HepG2 (cell line): ENCODE measurements at regions of chr2 and their contacts with region 1.

Region 1: DNA sequence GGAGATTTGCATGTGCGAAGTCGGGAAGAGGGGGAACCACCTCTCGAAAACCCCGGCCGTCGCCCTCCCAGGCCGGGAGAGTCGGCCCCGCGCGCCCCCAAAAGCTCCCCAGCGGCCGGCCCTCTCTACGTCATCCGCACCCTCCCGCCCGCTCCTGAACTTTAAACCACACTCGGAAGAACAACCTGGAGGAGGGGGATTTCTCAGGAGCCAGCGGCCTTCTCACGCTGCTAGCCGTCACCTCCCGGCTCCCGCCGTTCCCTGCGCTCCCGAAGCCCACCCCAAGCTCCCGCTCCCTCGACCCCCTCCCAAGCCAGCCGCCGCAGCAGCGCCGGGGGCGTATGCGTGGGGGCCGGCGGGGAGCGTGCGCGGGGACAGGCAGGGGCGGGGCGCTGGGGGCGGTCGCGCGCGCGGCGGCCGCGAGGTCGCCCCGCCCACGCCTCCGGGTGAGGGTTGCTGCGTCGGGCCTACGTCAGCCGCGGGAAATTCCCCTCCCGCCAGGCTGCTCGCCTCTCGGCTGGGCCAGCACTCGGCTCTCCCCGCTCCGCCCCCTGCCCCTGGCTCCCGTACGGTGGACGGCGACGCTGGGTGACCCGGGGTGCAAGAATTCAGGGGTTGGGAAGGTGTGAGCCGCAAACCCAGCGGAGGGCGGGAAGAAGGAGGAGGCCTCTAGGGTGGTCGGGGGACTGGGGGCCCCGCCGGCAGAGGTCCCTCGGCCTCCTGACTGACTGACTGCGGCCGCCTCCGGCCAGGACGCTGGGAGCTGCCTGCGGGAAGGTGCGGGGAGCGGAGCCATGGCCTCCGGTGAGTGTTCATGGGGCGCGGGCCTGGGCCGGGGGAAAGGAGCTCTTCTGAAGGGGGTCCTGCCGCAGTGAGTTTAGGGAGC is at the start of gene REL:
- DNase-seq: peak; percentile 83
- ATAC-seq: peak; percentile 93
- H3K4me3 ChIP-seq: peak within 1 kb of the TSS; percentile 94 to 98 (median 98)
- H3K27ac ChIP-seq: peak within 1 kb of the TSS; percentile 93
- H3K4me1 ChIP-seq: peaks cover 39% of the 10 kb centered on the region
- H3K27me3 ChIP-seq: no peaks in the 10 kb centered on the region; a peak in 1 of 5 replicates
- CTCF ChIP-seq: no peak; the same call in none of the 2 replicates
- EP300 ChIP-seq: peak in 1 of 2 experiments; percentile 38; a peak in 1 of 4 replicates
- POLR2A ChIP-seq: peak; percentile 61 to 84
- RAD21 ChIP-seq: no peak
- total RNA-seq, gene REL: 7.0 and 9.7 TPM in 2 replicates

Region 2: GRCh38 chr2:60621688-60622429 is 259.4 kb before region 1 on chr2:
- CTCF ChIA-PET with region 1: no interaction called
- POLR2A ChIA-PET with region 1: no interaction called
- in situ Hi-C with region 1: no loop called
- intact Hi-C with region 1: no loop called
- DNase-seq: no peak
- ATAC-seq: no peak
- H3K4me3 ChIP-seq: no peak overlapping the region
- H3K27ac ChIP-seq: no peak overlapping the region
- H3K4me1 ChIP-seq: no peaks in the 10 kb centered on the region
- H3K27me3 ChIP-seq: peaks cover 3 to 9% of the 10 kb centered on the region in 2 experiments; a peak in 3 of 5 replicates
- CTCF ChIP-seq: no peak
- EP300 ChIP-seq: no peak
- POLR2A ChIP-seq: no peak
- RAD21 ChIP-seq: no peak

Region 3: DNA sequence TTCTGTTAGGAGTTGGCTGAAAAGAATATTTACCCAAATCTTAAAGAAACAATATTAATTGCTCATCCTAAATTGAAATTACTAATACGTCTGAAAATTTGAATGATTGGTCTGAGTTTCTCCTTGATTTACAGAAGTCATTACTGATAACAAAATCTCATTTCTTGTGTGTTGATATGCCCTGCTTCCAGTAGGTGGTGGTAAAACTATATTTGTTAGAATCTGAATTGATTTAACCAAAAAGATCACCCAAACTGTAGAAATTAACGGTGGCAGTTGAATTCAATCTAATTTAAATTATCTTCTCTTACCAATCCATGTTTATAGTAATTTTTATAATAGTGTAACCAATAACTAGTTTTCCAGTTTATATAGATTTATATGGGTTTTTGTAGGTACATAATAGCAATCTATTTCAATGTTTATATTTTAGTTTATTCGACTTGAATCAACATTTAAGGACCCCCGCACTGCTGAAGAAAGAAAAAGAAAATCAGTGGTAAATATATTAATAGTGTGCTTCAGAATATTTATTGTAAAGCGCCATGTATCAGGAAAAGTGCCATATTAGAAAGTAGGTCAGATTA is 86.9 kb before region 1 on chr2:
- CTCF ChIA-PET with region 1: no interaction called
- POLR2A ChIA-PET with region 1: no interaction called
- in situ Hi-C with region 1: no loop called
- intact Hi-C with region 1: loop called (anchors 5 kb)
- DNase-seq: peak; percentile 16
- ATAC-seq: no peak
- H3K4me3 ChIP-seq: no peak overlapping the region
- H3K27ac ChIP-seq: no peak overlapping the region
- H3K4me1 ChIP-seq: no peaks in the 10 kb centered on the region
- H3K27me3 ChIP-seq: no peaks in the 10 kb centered on the region
- CTCF ChIP-seq: peak; percentile 55
- EP300 ChIP-seq: no peak
- POLR2A ChIP-seq: no peak
- RAD21 ChIP-seq: no peak

Region 4: DNA sequence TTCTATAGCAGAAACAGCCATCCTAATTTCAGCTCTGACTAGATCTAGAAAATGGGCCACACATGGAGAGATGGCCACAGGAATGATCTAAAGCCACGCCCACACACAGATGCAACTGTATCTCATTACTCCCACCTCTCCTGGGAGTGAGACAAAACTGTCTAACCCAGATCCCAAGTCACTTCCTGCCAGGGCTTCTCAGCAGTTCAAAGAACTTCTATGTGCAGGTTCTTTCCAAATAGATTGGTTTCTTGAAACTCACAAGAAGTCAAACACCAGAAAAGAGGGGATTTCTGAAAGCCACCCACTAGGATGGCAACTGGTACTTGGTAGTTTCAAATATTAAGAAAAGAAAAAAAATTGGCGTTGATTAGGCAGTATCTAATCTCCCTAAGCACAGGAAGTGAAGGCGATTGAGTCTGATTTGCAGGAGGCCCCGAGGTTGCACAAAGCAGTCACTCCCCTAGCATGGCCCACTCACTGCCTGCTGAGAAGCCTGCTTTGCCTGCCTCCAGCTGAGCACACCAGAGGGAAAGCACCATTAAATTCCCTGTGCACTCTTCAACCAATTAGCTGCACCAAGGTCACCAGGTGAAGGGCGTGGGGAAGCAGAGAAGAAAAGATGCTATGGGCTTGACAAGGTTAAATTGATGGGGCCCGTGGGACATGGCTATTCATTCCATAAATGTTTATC is 74.2 kb before region 1 on chr2:
- CTCF ChIA-PET with region 1: no interaction called
- POLR2A ChIA-PET with region 1: no interaction called
- in situ Hi-C with region 1: no loop called
- intact Hi-C with region 1: loop called (anchors 5 kb)
- DNase-seq: no peak
- ATAC-seq: peak; percentile 28
- H3K4me3 ChIP-seq: no peak overlapping the region
- H3K27ac ChIP-seq: no peak overlapping the region
- H3K4me1 ChIP-seq: peaks cover 35% of the 10 kb centered on the region
- H3K27me3 ChIP-seq: peaks cover 0 to 2% of the 10 kb centered on the region in 2 experiments; a peak in 1 of 5 replicates
- CTCF ChIP-seq: no peak
- EP300 ChIP-seq: no peak
- POLR2A ChIP-seq: no peak
- RAD21 ChIP-seq: no peak

Region 5: DNA sequence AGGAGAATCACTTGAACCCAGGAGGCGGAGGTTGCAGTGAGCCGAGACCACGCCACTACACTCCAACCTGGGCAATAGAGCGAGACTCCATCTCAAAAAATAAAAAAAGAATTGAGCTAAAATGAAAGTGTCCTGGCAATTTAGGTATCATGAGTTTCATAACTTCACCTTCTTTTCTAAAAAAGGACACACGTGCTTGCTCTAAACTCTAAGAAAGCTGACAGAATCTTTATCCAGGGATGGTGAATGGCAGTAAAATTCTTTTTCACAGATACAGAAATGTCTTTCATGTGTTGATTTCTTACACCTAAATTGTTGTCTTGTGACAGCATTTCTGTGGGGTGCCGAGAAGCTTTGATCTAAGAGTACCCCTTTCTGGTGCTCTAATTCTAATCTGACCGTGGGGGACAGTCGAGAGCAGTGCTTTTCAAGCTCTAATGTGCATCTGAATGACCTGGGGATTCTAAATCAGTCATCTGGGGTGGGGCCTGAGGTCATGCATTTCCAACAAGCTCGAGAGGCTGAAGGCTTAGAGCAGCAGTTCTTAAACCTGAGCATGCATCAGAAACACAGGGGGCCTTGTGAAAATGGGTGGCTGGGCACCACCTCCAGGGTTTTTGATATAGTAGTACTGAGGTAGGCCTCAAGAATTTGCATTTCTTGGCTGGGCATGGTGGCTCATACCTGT is 42.0 kb before region 1 on chr2:
- CTCF ChIA-PET with region 1: no interaction called
- POLR2A ChIA-PET with region 1: no interaction called
- in situ Hi-C with region 1: no loop called
- intact Hi-C with region 1: no loop called
- DNase-seq: no peak
- ATAC-seq: no peak
- H3K4me3 ChIP-seq: no peak overlapping the region
- H3K27ac ChIP-seq: no peak overlapping the region
- H3K4me1 ChIP-seq: no peaks in the 10 kb centered on the region
- H3K27me3 ChIP-seq: peaks cover 2 to 29% of the 10 kb centered on the region in 2 experiments; a peak in 4 of 5 replicates
- CTCF ChIP-seq: no peak
- EP300 ChIP-seq: no peak
- POLR2A ChIP-seq: no peak
- RAD21 ChIP-seq: no peak

Region 6: DNA sequence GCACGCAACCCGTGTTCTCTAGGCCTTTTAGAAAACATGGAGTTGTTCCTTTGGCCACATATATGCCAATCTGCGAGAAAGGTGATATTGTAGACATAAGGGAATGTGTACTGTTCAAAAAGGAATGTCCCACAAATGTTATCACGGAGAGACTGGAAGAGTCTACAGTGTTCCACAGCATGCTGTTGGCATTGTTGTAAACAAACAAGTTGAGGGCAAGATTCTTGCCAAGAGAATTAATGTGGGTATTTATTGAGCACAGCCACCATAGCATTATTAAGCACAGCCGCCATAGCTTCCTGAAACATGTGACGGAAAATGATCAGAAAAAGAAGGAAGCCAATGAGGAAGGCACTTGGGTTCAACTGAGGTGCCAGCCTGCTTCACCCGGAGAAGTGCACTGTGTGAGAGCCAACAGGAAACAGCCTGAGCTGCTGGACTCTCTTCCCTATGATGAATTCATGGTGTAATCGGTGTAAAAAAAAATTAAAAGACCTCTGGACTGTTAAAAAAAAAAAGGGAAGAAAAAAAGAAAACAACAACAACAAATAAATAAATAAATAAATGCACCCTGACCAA is 28.9 kb before region 1 on chr2:
- CTCF ChIA-PET with region 1: no interaction called
- POLR2A ChIA-PET with region 1: no interaction called
- in situ Hi-C with region 1: no loop called
- intact Hi-C with region 1: no loop called
- DNase-seq: no peak
- ATAC-seq: no peak
- H3K4me3 ChIP-seq: no peak overlapping the region
- H3K27ac ChIP-seq: no peak overlapping the region
- H3K4me1 ChIP-seq: 0 out of 2 replicates have a peak, but pooled peaks cover under 1% of the 10 kb centered on the region
- H3K27me3 ChIP-seq: no peaks in the 10 kb centered on the region; a peak in 1 of 5 replicates
- CTCF ChIP-seq: no peak
- EP300 ChIP-seq: no peak
- POLR2A ChIP-seq: no peak
- RAD21 ChIP-seq: no peak

Region 7: GRCh38 chr2:60998628-60999545 is 117.6 kb after region 1 on chr2:
- CTCF ChIA-PET with region 1: no interaction called
- POLR2A ChIA-PET with region 1: no interaction called
- in situ Hi-C with region 1: no loop called
- intact Hi-C with region 1: no loop called
- DNase-seq: peak; percentile 62
- ATAC-seq: peak; percentile 64
- H3K4me3 ChIP-seq: no peak overlapping the region
- H3K27ac ChIP-seq: no peak overlapping the region
- H3K4me1 ChIP-seq: no peaks in the 10 kb centered on the region
- H3K27me3 ChIP-seq: no peaks in the 10 kb centered on the region
- CTCF ChIP-seq: peak; percentile 71
- EP300 ChIP-seq: no peak
- POLR2A ChIP-seq: no peak
- RAD21 ChIP-seq: peak; percentile 56